A549 (cell line): ENCODE measurements at regions of chr17 and their contacts with region 1.

Region 1: DNA sequence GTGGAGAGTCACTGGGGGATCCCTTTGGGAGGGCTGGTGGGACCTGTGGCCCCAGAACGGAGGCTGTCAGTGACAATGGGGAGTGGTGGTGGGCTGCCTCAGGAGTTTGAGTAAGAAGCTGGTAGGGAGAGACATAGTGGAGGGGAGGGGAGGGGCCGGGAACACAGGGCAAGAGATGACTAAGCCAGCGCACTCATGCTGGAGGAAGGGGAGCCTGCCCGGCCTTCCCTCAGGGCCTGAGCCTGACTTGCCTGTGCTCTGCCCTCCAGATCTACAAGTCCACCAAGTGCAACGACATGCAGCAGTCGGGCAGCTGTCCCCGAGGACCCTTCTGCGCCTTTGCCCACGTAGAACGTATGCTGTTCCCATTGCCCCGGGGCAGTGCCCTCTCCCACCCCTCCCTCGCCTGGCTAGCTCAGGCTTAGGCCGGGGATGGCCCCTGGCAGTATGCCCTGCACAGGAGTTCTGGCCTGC is 29.3 kb downstream of the UNC13D start:
- DNase-seq: peak in 1 of 2 experiments; percentile 46
- ATAC-seq: peak; percentile 73 to 80
- H3K4me3 ChIP-seq: no peak overlapping the region
- H3K27ac ChIP-seq: peak overlapping the region; percentile 49 to 70; a peak in 4 of 6 replicates
- H3K4me1 ChIP-seq: peaks cover 14% of the 10 kb centered on the region
- CTCF ChIP-seq: no peak
- EP300 ChIP-seq: no peak
- POLR2A ChIP-seq: no peak
- RAD21 ChIP-seq: no peak

Region 2: GRCh38 chr17:75087558-75088453 is 727.1 kb before region 1 on chr17 and contains the start of gene SLC16A5:
- CTCF ChIA-PET with region 1: no interaction called
- POLR2A ChIA-PET with region 1: no interaction called
- DNase-seq: peak; percentile 95 to 99
- ATAC-seq: peak; percentile 75 to 82
- H3K4me3 ChIP-seq: peak within 1 kb of the TSS; percentile 67
- H3K27ac ChIP-seq: peak within 1 kb of the TSS; percentile 95 to 96
- H3K4me1 ChIP-seq: peaks cover 77% of the 10 kb centered on the region
- CTCF ChIP-seq: no peak
- EP300 ChIP-seq: no peak
- POLR2A ChIP-seq: peak; percentile 87
- RAD21 ChIP-seq: peak in 1 of 2 experiments; percentile 28; a peak in 1 of 5 replicates
- polyA plus RNA-seq, gene SLC16A5: 19.0 and 20.1 TPM in 2 replicates

Region 3: GRCh38 chr17:75799398-75799797 is 15.5 kb before region 1 on chr17:
- CTCF ChIA-PET with region 1: interaction called, 13 read pairs
- POLR2A ChIA-PET with region 1: no interaction called
- DNase-seq: no peak
- ATAC-seq: peak; percentile 24 to 37; a peak in 4 of 6 replicates
- H3K4me3 ChIP-seq: no peak overlapping the region
- H3K27ac ChIP-seq: no peak overlapping the region
- H3K4me1 ChIP-seq: no peaks in the 10 kb centered on the region
- CTCF ChIP-seq: no peak
- EP300 ChIP-seq: no peak
- POLR2A ChIP-seq: no peak
- RAD21 ChIP-seq: no peak